Activated T-helper 2 cell treated with anti-CD3 and anti-CD28 coated beads, Interferon-gamma antibody, Interleukin-2, Interleukin-4, amounts not matched to agents 10 μg/mL and 5 μg/mL and 100 μg/mL, durations not matched to agents 14 hours and 24 hours and 36 hours (primary cell): ENCODE measurements at regions of chr11 and their contacts with region 1.

Region 1: GRCh38 chr11:117985953-117986887 is at the start of gene IL10RA:
- DNase-seq: peak; percentile 85
- H3K4me3 Mint-ChIP-seq: peak within 1 kb of the TSS; percentile 87
- H3K27ac Mint-ChIP-seq: peak within 1 kb of the TSS; percentile 90
- H3K4me1 Mint-ChIP-seq: peaks cover 58% of the 10 kb centered on the region
- H3K27me3 Mint-ChIP-seq: no peaks in the 10 kb centered on the region
- total RNA-seq, gene IL10RA: 144 and 147 TPM in 2 replicates

Region 2: GRCh38 chr11:117907251-117907981 is 78.8 kb before region 1 on chr11:
- intact Hi-C with region 1: loop called (anchors 5 kb)
- DNase-seq: peak; percentile 79
- H3K4me3 Mint-ChIP-seq: peak overlapping the region; percentile 71
- H3K27ac Mint-ChIP-seq: peak overlapping the region; percentile 88
- H3K4me1 Mint-ChIP-seq: peaks cover 23% of the 10 kb centered on the region
- H3K27me3 Mint-ChIP-seq: no peaks in the 10 kb centered on the region

Region 3: GRCh38 chr11:117941163-117941707 is 45.0 kb before region 1 on chr11:
- intact Hi-C with region 1: no loop called
- DNase-seq: no peak
- H3K4me3 Mint-ChIP-seq: no peak overlapping the region
- H3K27ac Mint-ChIP-seq: no peak overlapping the region
- H3K4me1 Mint-ChIP-seq: peaks cover 36% of the 10 kb centered on the region
- H3K27me3 Mint-ChIP-seq: no peaks in the 10 kb centered on the region

Region 4: DNA sequence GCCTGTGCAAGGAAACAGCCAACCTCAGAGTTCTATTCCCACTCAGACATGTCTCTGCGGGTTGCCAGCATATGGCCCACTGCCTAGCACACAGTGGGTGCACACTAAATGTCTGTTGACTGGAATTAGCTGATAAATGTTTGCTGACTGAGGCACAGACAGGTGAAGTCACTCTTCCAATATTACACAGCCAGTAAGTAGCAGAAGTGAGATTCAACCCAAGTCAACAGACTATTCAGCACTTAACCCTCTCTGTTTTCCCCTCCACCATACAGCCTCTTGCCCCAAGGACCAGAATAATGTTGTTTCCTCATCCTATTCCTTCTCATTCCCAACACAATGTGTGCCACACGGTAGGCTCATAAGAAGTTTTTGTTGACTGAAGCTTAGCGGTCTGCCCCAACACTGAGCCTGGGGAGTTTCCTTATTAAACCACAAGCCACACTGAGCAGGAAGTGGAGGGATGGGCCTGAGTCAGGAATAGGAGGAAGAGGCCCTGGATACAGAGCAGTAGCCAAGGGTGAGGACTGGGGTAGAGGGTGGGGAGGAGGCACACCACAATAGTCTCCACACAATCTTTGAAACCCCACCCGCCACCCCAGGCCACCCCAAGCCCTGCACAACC is 15.7 kb before region 1 on chr11:
- intact Hi-C with region 1: loop called (anchors 1 kb)
- DNase-seq: no peak
- H3K4me3 Mint-ChIP-seq: peak overlapping the region; percentile 34
- H3K27ac Mint-ChIP-seq: peak overlapping the region; percentile 54
- H3K4me1 Mint-ChIP-seq: peaks cover 63% of the 10 kb centered on the region
- H3K27me3 Mint-ChIP-seq: no peaks in the 10 kb centered on the region

Region 5: GRCh38 chr11:118002541-118003423 is 16.6 kb after region 1 on chr11:
- intact Hi-C with region 1: loop called (anchors 1 kb)
- DNase-seq: peak; percentile 61
- H3K4me3 Mint-ChIP-seq: peak overlapping the region; percentile 54
- H3K27ac Mint-ChIP-seq: peak overlapping the region; percentile 99
- H3K4me1 Mint-ChIP-seq: peaks cover 85% of the 10 kb centered on the region
- H3K27me3 Mint-ChIP-seq: no peaks in the 10 kb centered on the region

Region 6: GRCh38 chr11:118227865-118228785 is 241.9 kb after region 1 on chr11:
- intact Hi-C with region 1: loop called (anchors 5 kb)
- DNase-seq: peak; percentile 47
- H3K4me3 Mint-ChIP-seq: peak overlapping the region; percentile 67
- H3K27ac Mint-ChIP-seq: peak overlapping the region; percentile 95
- H3K4me1 Mint-ChIP-seq: peaks cover 52% of the 10 kb centered on the region
- H3K27me3 Mint-ChIP-seq: no peaks in the 10 kb centered on the region

Region 7: DNA sequence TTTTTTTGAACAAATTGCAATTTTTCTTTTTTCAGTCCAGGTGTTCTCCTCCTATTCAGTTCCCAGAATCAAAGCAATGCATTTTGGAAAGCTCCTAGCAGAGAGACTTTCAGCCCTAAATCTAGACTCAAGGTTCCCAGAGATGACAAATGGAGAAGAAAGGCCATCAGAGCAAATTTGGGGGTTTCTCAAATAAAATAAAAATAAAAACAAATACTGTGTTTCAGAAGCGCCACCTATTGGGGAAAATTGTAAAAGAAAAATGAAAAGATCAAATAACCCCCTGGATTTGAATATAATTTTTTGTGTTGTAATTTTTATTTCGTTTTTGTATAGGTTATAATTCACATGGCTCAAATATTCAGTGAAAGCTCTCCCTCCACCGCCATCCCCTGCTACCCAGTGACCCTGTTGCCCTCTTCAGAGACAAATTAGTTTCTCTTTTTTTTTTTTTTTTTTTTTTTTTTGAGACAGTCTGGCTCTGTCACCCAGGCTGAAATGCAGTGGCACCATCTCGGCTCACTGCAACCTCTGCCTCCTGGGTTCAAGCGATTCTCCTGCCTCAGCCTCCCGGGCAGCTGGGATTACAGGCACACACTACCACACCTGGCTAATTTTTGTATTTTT is 367.0 kb after region 1 on chr11:
- intact Hi-C with region 1: no loop called
- DNase-seq: no peak
- H3K4me3 Mint-ChIP-seq: no peak overlapping the region
- H3K27ac Mint-ChIP-seq: peak overlapping the region; percentile 68
- H3K4me1 Mint-ChIP-seq: peaks cover 13% of the 10 kb centered on the region
- H3K27me3 Mint-ChIP-seq: no peaks in the 10 kb centered on the region